Activated CD4-positive, alpha-beta T cell treated with anti-CD3 and anti-CD28 coated beads, Interleukin-2, amount 10 ng/mL, durations not matched to agents 24 days and 14 days (primary cell): ENCODE measurements at regions of chr18 and their contacts with region 1.

Region 1: DNA sequence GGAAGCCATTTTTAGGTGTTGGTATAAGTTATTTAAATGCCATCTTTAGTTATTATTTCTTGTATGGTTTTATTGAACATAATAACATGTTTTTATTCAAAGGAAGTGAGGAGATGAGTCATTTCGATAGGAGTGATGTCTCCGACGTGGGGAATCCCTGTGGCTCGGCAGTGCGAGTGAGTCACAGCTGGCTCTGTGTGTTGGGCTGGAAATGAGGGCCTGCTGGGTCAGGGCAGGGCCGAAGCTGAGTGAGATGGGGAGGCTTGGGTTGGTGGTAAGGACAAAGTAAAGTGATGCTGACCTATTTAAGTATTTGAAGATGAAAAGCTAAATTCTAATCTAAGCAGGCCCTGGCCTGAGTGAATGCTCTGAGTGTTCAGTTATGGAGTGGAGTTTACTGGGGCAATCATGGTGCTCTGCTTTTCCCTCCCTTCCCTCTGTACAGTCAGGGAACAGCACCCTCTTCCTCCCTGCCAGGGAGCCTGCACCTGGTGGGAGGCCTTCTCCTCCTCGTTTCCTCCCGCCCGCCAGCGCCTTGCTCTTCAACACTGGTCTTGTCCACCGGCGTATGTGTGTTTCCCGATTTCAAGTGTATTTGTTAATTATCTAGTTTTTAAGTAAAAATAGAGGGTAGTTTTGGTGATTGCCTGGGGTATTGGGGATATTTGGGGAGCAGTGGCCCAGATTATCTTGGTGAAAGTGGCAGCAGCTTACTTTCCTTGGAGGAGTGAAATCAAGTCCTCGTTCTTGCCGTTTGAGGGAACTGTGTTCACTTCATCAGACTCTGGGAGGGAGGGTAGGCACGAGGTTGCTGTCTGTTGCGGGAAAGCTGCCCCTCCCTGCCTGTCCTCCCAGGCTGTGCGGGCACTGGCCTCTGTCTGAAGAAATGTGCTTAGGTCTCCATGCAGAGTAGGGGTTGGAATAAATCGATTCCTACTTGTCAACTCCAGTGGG is 157.0 kb downstream of the LDLRAD4 start:
- DNase-seq: peak; percentile 94
- H3K4me3 Mint-ChIP-seq: peak overlapping the region; percentile 74
- H3K27ac Mint-ChIP-seq: peak overlapping the region; percentile 93
- H3K4me1 Mint-ChIP-seq: peaks cover 69% of the 10 kb centered on the region
- H3K27me3 Mint-ChIP-seq: no peaks in the 10 kb centered on the region

Region 2: GRCh38 chr18:13067124-13067523 is 308.5 kb before region 1 on chr18:
- intact Hi-C with region 1: no loop called
- DNase-seq: no peak
- H3K4me3 Mint-ChIP-seq: no peak overlapping the region
- H3K27ac Mint-ChIP-seq: peak overlapping the region; percentile 41
- H3K4me1 Mint-ChIP-seq: peaks cover 15% of the 10 kb centered on the region
- H3K27me3 Mint-ChIP-seq: no peaks in the 10 kb centered on the region

Region 3: GRCh38 chr18:13289481-13290205 is 85.9 kb before region 1 on chr18:
- intact Hi-C with region 1: loop called (anchors 1 kb)
- DNase-seq: no peak
- H3K4me3 Mint-ChIP-seq: no peak overlapping the region
- H3K27ac Mint-ChIP-seq: peak overlapping the region; percentile 83
- H3K4me1 Mint-ChIP-seq: peaks cover 39% of the 10 kb centered on the region
- H3K27me3 Mint-ChIP-seq: no peaks in the 10 kb centered on the region

Region 4: GRCh38 chr18:13464432-13465123 is 89.0 kb after region 1 on chr18:
- intact Hi-C with region 1: loop called (anchors 2 kb)
- DNase-seq: peak; percentile 91
- H3K4me3 Mint-ChIP-seq: peak overlapping the region; percentile 90
- H3K27ac Mint-ChIP-seq: peak overlapping the region; percentile 92
- H3K4me1 Mint-ChIP-seq: peaks cover 53% of the 10 kb centered on the region
- H3K27me3 Mint-ChIP-seq: no peaks in the 10 kb centered on the region

Region 5: DNA sequence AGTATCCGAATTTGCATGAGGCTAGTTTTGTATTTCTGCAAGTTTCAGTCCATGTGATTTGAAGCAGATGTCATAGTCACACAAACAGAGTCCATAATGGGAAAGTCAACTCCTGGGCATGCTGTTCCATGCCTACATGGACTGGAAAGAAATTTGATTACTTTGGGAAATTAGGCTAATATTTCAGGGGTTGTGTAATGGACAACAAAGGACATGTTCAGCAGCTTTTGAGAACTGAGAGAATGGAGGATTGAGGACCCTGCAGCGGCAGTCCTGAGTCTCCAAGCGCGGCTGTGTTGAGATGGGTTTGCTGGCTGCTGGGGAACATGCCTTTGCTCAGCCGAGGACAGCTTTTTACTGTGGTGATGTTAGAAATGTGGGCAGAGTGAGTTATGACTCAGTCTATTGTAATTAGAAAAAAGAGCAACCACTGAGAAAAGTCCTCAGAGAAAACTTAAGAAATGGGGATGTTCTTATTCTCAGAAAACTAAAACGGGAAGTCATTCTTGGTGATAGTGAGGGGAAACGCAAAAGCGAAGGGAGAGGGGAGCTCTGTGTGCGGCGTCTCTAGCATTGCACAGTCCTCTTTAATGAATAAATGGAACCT is 201.6 kb after region 1 on chr18:
- intact Hi-C with region 1: loop called (anchors 5 kb)
- DNase-seq: peak; percentile 85
- H3K4me3 Mint-ChIP-seq: peak overlapping the region; percentile 71
- H3K27ac Mint-ChIP-seq: peak overlapping the region; percentile 82
- H3K4me1 Mint-ChIP-seq: peaks cover 51% of the 10 kb centered on the region
- H3K27me3 Mint-ChIP-seq: no peaks in the 10 kb centered on the region